ENCODE measurements at regions of chr12 and their contacts with region 1.

Region 1: GRCh38 chr12:107912421-107913004 is 138.0 kb downstream of the ASCL4 start:
- DNase-seq: peak; percentile 85
- ATAC-seq: peak; percentile 94
- H3K4me3 Mint-ChIP-seq: peak overlapping the region; percentile 93
- H3K27ac Mint-ChIP-seq: no peak overlapping the region
- H3K4me1 Mint-ChIP-seq: no peaks in the 10 kb centered on the region
- H3K27me3 Mint-ChIP-seq: peaks cover 52% of the 10 kb centered on the region
- CTCF ChIP-seq: peak; percentile 94

Region 2: GRCh38 chr12:107760809-107761501 is 151.6 kb before region 1 on chr12 and contains the start of gene PRDM4:
- CTCF ChIA-PET with region 1: interaction called, 11 read pairs
- POLR2A ChIA-PET with region 1: no interaction called
- DNase-seq: peak; percentile 92
- ATAC-seq: peak; percentile 92
- H3K4me3 Mint-ChIP-seq: peak within 1 kb of the TSS; percentile 88
- H3K27ac Mint-ChIP-seq: peak within 1 kb of the TSS; percentile 34
- H3K4me1 Mint-ChIP-seq: peaks cover 14% of the 10 kb centered on the region
- H3K27me3 Mint-ChIP-seq: peaks cover 17% of the 10 kb centered on the region
- CTCF ChIP-seq: no peak
- total RNA-seq, gene PRDM4: 18.2 to 21.4 TPM (median 20.5 TPM) in 3 replicates

Region 3: DNA sequence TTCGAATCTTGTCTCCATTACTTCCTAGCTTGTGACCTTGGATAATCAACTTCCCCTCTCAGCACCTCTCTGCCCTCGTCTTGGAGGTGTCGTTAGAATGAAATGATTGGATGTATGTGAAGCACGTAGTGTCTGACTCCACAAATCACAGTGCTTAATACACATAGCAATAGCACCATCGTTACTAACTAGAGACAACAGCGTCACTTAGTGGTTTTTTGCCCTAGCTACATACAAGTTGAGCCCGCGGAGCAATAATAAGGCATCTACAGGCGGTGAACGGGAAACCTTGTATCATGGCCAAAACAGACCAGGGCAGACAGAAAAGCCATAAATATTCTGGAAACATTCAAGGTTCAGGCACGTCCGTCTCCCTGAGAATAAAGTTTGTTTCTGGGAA is 16.9 kb after region 1 on chr12:
- CTCF ChIA-PET with region 1: interaction called, 31 read pairs
- POLR2A ChIA-PET with region 1: no interaction called
- DNase-seq: no peak
- ATAC-seq: peak; percentile 97
- H3K4me3 Mint-ChIP-seq: no peak overlapping the region
- H3K27ac Mint-ChIP-seq: no peak overlapping the region
- H3K4me1 Mint-ChIP-seq: 0 out of 2 replicates have a peak, but pooled peaks cover 3% of the 10 kb centered on the region
- H3K27me3 Mint-ChIP-seq: peaks cover 19% of the 10 kb centered on the region
- CTCF ChIP-seq: no peak

Region 4: DNA sequence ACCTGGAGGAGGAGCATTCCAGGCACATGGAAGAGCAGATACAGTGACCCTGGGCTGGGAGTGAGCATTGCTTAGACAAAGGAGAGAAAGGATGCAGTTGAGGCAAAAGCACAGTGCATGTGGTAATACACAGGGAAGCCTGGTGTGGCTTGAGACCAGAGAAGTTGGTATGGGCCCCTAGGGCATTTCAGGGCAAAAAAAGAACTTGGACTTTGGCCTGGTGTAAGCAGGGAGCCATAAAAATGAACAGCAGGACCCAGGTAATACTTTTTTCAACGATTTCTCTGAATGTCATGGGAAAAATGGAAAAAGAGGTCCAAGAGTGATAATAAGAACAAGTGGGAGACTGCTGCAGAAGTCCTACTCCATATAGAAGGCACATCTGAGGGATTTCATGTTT is 25.9 kb after region 1 on chr12:
- CTCF ChIA-PET with region 1: interaction called, 14 read pairs
- POLR2A ChIA-PET with region 1: no interaction called
- DNase-seq: no peak
- ATAC-seq: no peak
- H3K4me3 Mint-ChIP-seq: no peak overlapping the region
- H3K27ac Mint-ChIP-seq: no peak overlapping the region
- H3K4me1 Mint-ChIP-seq: peaks cover 15% of the 10 kb centered on the region
- H3K27me3 Mint-ChIP-seq: peaks cover 31% of the 10 kb centered on the region
- CTCF ChIP-seq: no peak